ENCODE measurements at regions of chr10 and their contacts with region 1.

Region 1: GRCh38 chr10:102503281-102504220 is at the start of gene SUFU:
- DNase-seq: peak; percentile 95
- H3K4me3 Mint-ChIP-seq: no peak within 1 kb of the TSS
- H3K27ac Mint-ChIP-seq: peak within 1 kb of the TSS; percentile 77
- H3K4me1 Mint-ChIP-seq: peaks cover 22% of the 10 kb centered on the region
- H3K27me3 Mint-ChIP-seq: no peaks in the 10 kb centered on the region
- total RNA-seq, gene SUFU: 11.1 and 12.4 TPM in 2 replicates

Region 2: GRCh38 chr10:102151774-102152544 is 351.6 kb before region 1 on chr10 and contains the start of gene NOLC1:
- intact Hi-C with region 1: loop called (anchors 1 kb)
- DNase-seq: peak; percentile 100
- H3K4me3 Mint-ChIP-seq: peak within 1 kb of the TSS; percentile 97
- H3K27ac Mint-ChIP-seq: peak within 1 kb of the TSS; percentile 96
- H3K4me1 Mint-ChIP-seq: peaks cover 28% of the 10 kb centered on the region
- H3K27me3 Mint-ChIP-seq: no peaks in the 10 kb centered on the region
- total RNA-seq, gene NOLC1: 195 and 196 TPM in 2 replicates

Region 3: DNA sequence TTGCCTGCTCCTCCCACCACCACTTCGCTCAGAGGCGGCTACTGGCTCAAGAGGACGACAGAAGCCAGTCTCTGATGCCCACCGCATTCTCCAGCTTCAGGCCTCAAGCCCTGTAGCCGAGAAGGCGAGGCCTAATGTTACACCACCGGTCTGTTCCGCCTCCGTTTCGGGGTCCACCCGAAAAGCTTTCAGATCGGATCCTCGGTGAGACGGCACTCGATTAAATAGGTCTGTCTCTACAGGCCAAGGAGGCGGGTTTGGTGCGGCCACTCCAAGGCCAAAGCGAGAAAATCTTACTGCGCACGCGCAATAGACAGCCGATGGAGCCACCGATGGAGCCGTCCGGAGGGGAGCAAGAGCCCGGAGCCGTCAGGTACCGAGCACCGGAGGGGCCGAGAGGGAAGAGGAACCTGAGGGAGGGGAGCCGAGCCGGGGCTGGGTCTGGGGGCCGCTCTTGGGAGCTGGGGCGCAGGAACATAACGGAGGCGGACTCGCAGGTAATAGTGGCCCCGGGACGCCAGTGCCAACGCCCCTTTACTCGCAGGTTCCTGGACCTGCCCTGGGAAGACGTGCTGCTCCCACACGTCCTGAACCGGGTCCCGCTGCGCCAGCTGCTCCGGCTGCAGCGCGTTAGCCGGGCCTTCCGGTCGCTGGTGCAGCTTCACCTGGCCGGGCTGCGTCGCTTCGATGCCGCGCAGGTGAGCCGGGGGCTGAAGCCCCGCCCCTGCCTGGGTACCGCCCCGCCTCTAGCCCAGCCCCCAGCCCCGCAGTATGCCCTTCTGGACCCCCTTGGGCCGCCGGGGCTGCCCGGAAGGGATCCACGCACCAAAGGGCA is 82.5 kb before region 1 on chr10 and contains the start of gene FBXL15:
- intact Hi-C with region 1: loop called (anchors 2 kb)
- DNase-seq: peak; percentile 95
- H3K4me3 Mint-ChIP-seq: peak within 1 kb of the TSS; percentile 93
- H3K27ac Mint-ChIP-seq: peak within 1 kb of the TSS; percentile 87
- H3K4me1 Mint-ChIP-seq: peaks cover 17% of the 10 kb centered on the region
- H3K27me3 Mint-ChIP-seq: peaks cover 18% of the 10 kb centered on the region
- total RNA-seq, gene FBXL15: 14.8 and 15.1 TPM in 2 replicates

Region 4: GRCh38 chr10:102461187-102462054 is 42.1 kb before region 1 on chr10:
- intact Hi-C with region 1: loop called (anchors 2 kb)
- DNase-seq: peak; percentile 88
- H3K4me3 Mint-ChIP-seq: peak overlapping the region; percentile 90
- H3K27ac Mint-ChIP-seq: peak overlapping the region; percentile 85
- H3K4me1 Mint-ChIP-seq: peaks cover 24% of the 10 kb centered on the region
- H3K27me3 Mint-ChIP-seq: no peaks in the 10 kb centered on the region

Region 5: GRCh38 chr10:102660888-102661657 is 157.5 kb after region 1 on chr10:
- intact Hi-C with region 1: loop called (anchors 1 kb)
- DNase-seq: peak; percentile 65
- H3K4me3 Mint-ChIP-seq: peak overlapping the region; percentile 63
- H3K27ac Mint-ChIP-seq: peak overlapping the region; percentile 90
- H3K4me1 Mint-ChIP-seq: peaks cover 28% of the 10 kb centered on the region
- H3K27me3 Mint-ChIP-seq: no peaks in the 10 kb centered on the region

Region 6: DNA sequence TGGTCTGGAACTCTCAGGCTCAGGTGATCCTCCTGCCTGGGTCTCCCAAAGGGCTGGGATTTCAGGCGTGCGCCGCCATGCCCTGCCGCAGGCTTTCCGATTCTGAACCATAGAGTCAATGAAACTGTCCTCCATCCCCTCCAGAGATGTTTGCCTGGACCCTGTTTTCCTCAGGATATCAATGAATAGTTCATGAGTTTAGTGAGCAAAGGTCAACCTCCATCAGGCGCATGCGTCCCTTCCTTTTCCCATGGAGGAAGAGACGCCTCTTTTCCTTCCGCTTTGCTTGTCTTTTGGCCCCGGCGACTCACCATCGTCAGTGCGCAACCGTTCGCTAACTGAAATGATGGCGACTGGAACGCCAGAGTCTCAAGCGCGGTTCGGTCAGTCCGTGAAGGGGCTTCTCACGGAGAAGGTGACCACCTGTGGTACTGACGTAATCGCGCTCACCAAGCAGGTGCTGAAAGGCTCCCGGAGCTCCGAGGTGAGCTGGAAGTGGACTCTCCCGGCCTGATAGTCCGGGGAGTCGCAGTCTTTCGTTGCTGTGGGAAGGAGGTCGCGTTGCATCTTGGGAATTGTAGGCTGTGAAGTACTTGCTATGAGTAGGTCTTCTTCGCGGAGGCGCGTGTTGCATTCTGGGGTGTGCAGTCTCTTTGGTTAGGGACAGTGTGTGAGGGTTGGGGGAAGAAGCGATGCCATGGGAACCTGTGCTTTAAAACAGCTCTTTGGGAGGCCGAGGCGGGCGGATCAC is 350.6 kb after region 1 on chr10 and contains the start of gene BORCS7:
- intact Hi-C with region 1: loop called (anchors 1 kb)
- DNase-seq: peak; percentile 86
- H3K4me3 Mint-ChIP-seq: peak within 1 kb of the TSS; percentile 93
- H3K27ac Mint-ChIP-seq: peak within 1 kb of the TSS; percentile 96
- H3K4me1 Mint-ChIP-seq: peaks cover 16% of the 10 kb centered on the region
- H3K27me3 Mint-ChIP-seq: no peaks in the 10 kb centered on the region
- total RNA-seq, gene BORCS7: 10.4 and 10.7 TPM in 2 replicates

Measured in activated T-helper 2 cell treated with anti-CD3 and anti-CD28 coated beads, Interferon-gamma antibody, Interleukin-2, Interleukin-4, amounts not matched to agents 10 μg/mL and 5 μg/mL and 100 μg/mL, durations not matched to agents 14 hours and 24 hours and 36 hours (primary cell).